Naive thymus-derived CD4-positive, alpha-beta T cell (primary cell): ENCODE measurements at regions of chr13 and their contacts with region 1.

Region 1: GRCh38 chr13:41352935-41353840 is 42.1 kb downstream of the NAA16 start:
- DNase-seq: peak; percentile 15 to 74 (median 66)
- ATAC-seq: peak; percentile 80
- H3K4me3 ChIP-seq: no peak overlapping the region
- H3K4me3 Mint-ChIP-seq: peak overlapping the region in 9 of 10 donors; percentile 19 to 80 (median 53)
- H3K27ac ChIP-seq: peak overlapping the region; percentile 68
- H3K27ac Mint-ChIP-seq: peak overlapping the region; percentile 73 to 96 (median 88)
- H3K4me1 ChIP-seq: peaks cover 34 to 52% of the 10 kb centered on the region in 2 donors
- H3K4me1 Mint-ChIP-seq: peaks cover 24 to 72% (median 59%) of the 10 kb centered on the region in 7 donors
- H3K27me3 ChIP-seq: no peaks in the 10 kb centered on the region
- H3K27me3 Mint-ChIP-seq: no peaks in the 10 kb centered on the region

Region 2: DNA sequence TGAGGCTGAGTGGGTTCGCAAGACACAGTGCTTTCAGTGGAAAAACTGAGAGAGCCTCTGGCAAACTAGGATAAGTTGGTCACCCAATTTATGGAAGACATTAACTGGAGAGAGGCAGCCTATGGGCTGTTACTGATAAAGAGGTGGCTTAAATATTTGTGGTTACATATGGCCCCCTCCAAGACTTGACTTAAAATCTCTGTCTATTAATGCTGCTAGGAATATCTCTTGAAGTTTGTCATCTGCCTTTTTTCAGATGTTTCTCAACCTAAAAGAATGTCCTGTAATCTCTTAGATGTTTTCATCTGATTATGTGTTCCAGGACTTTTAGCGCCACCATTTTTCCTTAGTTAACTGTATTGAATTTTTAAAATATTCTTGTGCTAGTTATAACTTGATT is 12.4 kb after region 1 on chr13:
- CTCF ChIA-PET with region 1: interaction called, 6 read pairs
- POLR2A ChIA-PET with region 1: interaction called, 5 read pairs
- intact Hi-C with region 1: loop called in 1 of 2 experiments (anchors 1 kb)
- DNase-seq: no peak
- ATAC-seq: no peak
- H3K4me3 ChIP-seq: no peak overlapping the region
- H3K4me3 Mint-ChIP-seq: no peak overlapping the region
- H3K27ac ChIP-seq: no peak overlapping the region
- H3K27ac Mint-ChIP-seq: peak overlapping the region in 3 of 9 donors; percentile 49 to 76 (median 49)
- H3K4me1 ChIP-seq: no peaks in the 10 kb centered on the region
- H3K4me1 Mint-ChIP-seq: peaks cover 3 to 67% (median 43%) of the 10 kb centered on the region in 7 donors
- H3K27me3 ChIP-seq: no peaks in the 10 kb centered on the region
- H3K27me3 Mint-ChIP-seq: no peaks in the 10 kb centered on the region

Region 3: GRCh38 chr13:41411522-41411921 is 58.3 kb after region 1 on chr13:
- CTCF ChIA-PET with region 1: interaction called, 3 read pairs
- POLR2A ChIA-PET with region 1: interaction called, 6 read pairs
- intact Hi-C with region 1: loop called in 1 of 2 experiments (anchors 1 kb)
- DNase-seq: peak in 6 of 9 donors; percentile 17 to 54 (median 28)
- ATAC-seq: peak; percentile 48
- H3K4me3 ChIP-seq: no peak overlapping the region
- H3K4me3 Mint-ChIP-seq: no peak overlapping the region
- H3K27ac ChIP-seq: no peak overlapping the region
- H3K27ac Mint-ChIP-seq: peak overlapping the region in 2 of 9 donors; percentile 36 to 66
- H3K4me1 ChIP-seq: no peaks in the 10 kb centered on the region
- H3K4me1 Mint-ChIP-seq: peaks cover 0 to 4% (median 0%) of the 10 kb centered on the region in 7 donors
- H3K27me3 ChIP-seq: no peaks in the 10 kb centered on the region
- H3K27me3 Mint-ChIP-seq: peaks cover 0 to 13% (median 0%) of the 10 kb centered on the region in 5 donors

Region 4: GRCh38 chr13:41652727-41653361 is 299.7 kb after region 1 on chr13:
- CTCF ChIA-PET with region 1: interaction called, 7 read pairs
- POLR2A ChIA-PET with region 1: interaction called, 4 read pairs
- intact Hi-C with region 1: loop called (anchors 1 kb)
- DNase-seq: peak in 7 of 9 donors; percentile 19 to 60 (median 50)
- ATAC-seq: peak; percentile 54
- H3K4me3 ChIP-seq: no peak overlapping the region
- H3K4me3 Mint-ChIP-seq: no peak overlapping the region
- H3K27ac ChIP-seq: no peak overlapping the region
- H3K27ac Mint-ChIP-seq: peak overlapping the region in 1 of 9 donors; percentile 36
- H3K4me1 ChIP-seq: peaks cover 0 to 5% of the 10 kb centered on the region in 2 donors
- H3K4me1 Mint-ChIP-seq: peaks cover 0 to 24% (median 12%) of the 10 kb centered on the region in 7 donors
- H3K27me3 ChIP-seq: no peaks in the 10 kb centered on the region
- H3K27me3 Mint-ChIP-seq: no peaks in the 10 kb centered on the region

Region 5: GRCh38 chr13:42039946-42040729 is 687.0 kb after region 1 on chr13:
- CTCF ChIA-PET with region 1: no interaction called
- POLR2A ChIA-PET with region 1: no interaction called
- intact Hi-C with region 1: loop called (anchors 5 kb)
- DNase-seq: peak; percentile 67 to 87 (median 79)
- ATAC-seq: peak; percentile 92
- H3K4me3 ChIP-seq: peak overlapping the region; percentile 70
- H3K4me3 Mint-ChIP-seq: peak overlapping the region; percentile 83 to 95 (median 90)
- H3K27ac ChIP-seq: peak overlapping the region; percentile 73
- H3K27ac Mint-ChIP-seq: peak overlapping the region; percentile 29 to 91 (median 84)
- H3K4me1 ChIP-seq: peaks cover 7 to 8% of the 10 kb centered on the region in 2 donors
- H3K4me1 Mint-ChIP-seq: peaks cover 7 to 22% (median 20%) of the 10 kb centered on the region in 7 donors
- H3K27me3 ChIP-seq: no peaks in the 10 kb centered on the region
- H3K27me3 Mint-ChIP-seq: peaks cover 0 to 58% (median 0%) of the 10 kb centered on the region in 5 donors